Activated CD4-positive, alpha-beta memory T cell treated with anti-CD3 and anti-CD28 coated beads for 36 hours (primary cell): ENCODE measurements at regions of chr11 and their contacts with region 1.

Region 1: GRCh38 chr11:15074206-15075161 is 1.1 kb downstream of the CALCB start:
- DNase-seq: peak; percentile 92
- H3K4me3 Mint-ChIP-seq: peak overlapping the region; percentile 78
- H3K27ac Mint-ChIP-seq: peak overlapping the region; percentile 26
- H3K4me1 Mint-ChIP-seq: peaks cover 17% of the 10 kb centered on the region
- H3K27me3 Mint-ChIP-seq: peaks cover 10% of the 10 kb centered on the region

Region 2: DNA sequence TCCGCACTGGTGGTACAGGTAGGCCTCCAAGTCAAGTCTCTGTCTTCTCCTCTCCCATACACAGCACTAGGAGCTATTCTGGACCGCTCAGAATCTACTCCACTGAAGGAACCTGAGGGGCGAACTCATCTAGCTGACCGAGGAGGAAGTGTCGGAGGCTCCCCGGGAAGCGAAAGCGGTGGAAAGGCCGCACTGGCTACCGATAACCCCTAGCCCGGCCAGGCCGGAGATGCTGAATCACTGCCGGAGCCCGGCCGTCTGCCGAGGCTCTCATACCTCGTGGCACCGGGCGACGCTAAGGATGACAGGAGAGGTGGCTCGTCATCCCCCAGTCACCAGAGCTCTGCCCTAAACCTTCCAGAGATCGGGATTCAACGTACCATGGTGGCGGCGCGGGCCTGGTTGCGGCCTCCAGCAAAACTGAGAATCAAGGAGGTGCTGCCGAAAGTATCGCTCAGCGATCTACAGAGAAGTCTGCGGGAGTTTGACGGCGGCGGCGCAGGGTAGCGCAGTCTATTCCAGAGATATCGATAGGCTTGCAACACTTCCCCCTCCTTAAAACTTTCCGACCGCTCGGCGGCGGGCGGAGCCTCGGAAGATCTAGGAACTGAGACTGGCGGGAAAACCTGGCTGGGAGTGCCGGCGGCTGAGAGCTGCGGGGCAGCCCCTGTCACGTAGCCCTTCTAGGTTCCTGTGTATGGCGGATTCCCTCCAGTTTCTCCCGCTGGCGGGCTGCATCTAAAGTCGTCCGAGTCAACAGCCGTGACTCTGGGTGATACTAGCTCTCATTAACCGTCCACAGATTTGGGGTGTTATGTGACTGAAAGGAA is 554.4 kb before region 1 on chr11 and contains the start of gene PSMA1:
- CTCF ChIA-PET with region 1: no interaction called
- POLR2A ChIA-PET with region 1: no interaction called
- intact Hi-C with region 1: loop called (anchors 10 kb)
- DNase-seq: peak; percentile 97
- H3K4me3 Mint-ChIP-seq: peak within 1 kb of the TSS; percentile 96
- H3K27ac Mint-ChIP-seq: peak within 1 kb of the TSS; percentile 97
- H3K4me1 Mint-ChIP-seq: peaks cover 28% of the 10 kb centered on the region
- H3K27me3 Mint-ChIP-seq: no peaks in the 10 kb centered on the region
- total RNA-seq, gene PSMA1: 332 to 339 TPM

Region 3: DNA sequence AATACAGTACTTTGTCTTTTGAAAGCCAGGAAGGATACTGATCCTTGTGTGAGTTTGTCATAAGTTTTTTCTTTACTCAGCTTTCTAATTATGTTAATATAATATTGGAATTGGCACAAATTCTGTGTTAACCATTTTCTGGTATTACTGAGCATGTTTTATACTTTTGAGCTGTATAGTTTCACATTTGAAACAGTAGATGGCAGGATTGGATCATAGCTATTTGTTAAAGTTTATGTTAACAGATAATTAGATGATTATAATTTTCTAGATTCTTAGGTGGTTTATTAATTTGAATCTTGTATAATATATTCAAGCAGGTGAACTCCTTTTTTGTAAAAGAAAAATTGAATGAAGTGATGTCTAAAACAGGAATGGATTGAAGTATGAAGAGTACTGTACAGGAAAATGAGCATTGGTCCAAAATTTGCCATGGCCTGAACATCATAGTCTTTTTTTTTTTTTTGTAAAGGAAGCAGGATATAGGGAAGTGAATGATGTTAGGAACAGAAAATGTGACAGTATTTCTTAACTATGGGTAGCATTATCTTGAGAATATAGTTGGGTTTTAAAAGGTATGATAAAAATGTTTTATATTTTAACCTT is 284.5 kb before region 1 on chr11:
- CTCF ChIA-PET with region 1: interaction called, 9 read pairs
- POLR2A ChIA-PET with region 1: no interaction called
- intact Hi-C with region 1: loop called (anchors 2 kb)
- DNase-seq: no peak
- H3K4me3 Mint-ChIP-seq: no peak overlapping the region
- H3K27ac Mint-ChIP-seq: no peak overlapping the region
- H3K4me1 Mint-ChIP-seq: peaks cover 14% of the 10 kb centered on the region
- H3K27me3 Mint-ChIP-seq: no peaks in the 10 kb centered on the region

Region 4: DNA sequence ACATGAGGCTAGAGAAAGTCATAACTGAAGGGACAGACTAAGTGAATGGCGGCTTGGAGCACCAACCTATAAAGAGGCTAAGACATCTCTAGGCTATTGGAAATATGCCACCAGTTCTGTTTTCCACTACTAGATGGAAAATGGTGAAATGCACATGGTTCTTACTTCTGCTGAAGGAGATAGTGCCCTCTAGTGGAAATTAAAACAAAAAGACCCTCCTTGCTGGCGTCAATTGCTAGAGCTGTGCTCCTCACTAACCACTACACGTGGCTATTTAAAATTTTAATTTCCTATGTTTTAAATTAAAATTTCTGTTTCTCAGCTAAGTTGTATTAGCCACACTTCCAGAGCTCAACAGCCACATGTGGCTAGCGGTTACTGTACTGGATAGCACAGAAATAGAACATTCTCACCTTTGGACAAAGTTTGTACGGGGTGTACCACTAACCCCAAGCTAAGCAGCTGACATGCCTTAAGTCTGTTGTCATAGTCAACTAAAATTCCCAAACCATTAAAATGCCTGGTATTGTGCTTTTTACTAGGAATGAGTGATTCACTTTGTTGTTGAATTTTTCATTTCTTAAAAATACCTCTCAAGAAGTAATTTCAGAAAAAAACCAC is 68.2 kb before region 1 on chr11:
- CTCF ChIA-PET with region 1: interaction called, 65 read pairs
- POLR2A ChIA-PET with region 1: no interaction called
- intact Hi-C with region 1: loop called (anchors 1 kb)
- DNase-seq: peak; percentile 10
- H3K4me3 Mint-ChIP-seq: no peak overlapping the region
- H3K27ac Mint-ChIP-seq: no peak overlapping the region
- H3K4me1 Mint-ChIP-seq: peaks cover 2% of the 10 kb centered on the region
- H3K27me3 Mint-ChIP-seq: peaks cover 32% of the 10 kb centered on the region

Region 5: DNA sequence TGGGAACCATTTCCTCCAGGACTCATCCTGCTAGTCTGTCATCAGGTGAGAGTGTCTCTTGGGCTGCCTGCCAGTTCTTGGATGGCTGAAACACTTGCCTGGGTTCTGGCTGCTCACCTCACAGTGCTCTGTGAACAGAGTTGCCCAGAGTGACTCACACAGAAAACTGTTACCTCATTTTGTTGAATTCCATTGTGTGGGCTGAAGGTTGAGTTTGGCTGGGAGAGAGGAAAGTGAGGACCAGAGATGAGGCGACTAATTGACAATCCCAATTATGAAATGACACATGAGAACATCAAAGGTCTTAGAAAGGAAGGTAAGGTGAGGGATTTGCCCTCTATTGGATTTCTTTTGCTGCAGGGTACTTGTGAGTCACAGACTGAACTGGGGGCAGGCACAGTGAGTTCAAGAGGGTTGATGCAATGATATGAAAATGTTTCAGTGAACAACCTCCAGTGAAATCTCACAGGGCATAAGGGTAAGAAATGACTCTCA is 21.2 kb before region 1 on chr11:
- CTCF ChIA-PET with region 1: interaction called, 16 read pairs
- POLR2A ChIA-PET with region 1: no interaction called
- intact Hi-C with region 1: loop called (anchors 1 kb)
- DNase-seq: peak; percentile 56
- H3K4me3 Mint-ChIP-seq: no peak overlapping the region
- H3K27ac Mint-ChIP-seq: peak overlapping the region; percentile 61
- H3K4me1 Mint-ChIP-seq: peaks cover 19% of the 10 kb centered on the region
- H3K27me3 Mint-ChIP-seq: peaks cover 3% of the 10 kb centered on the region

Region 6: GRCh38 chr11:15189641-15190365 is 115.3 kb after region 1 on chr11:
- CTCF ChIA-PET with region 1: no interaction called
- POLR2A ChIA-PET with region 1: no interaction called
- intact Hi-C with region 1: no loop called
- DNase-seq: no peak
- H3K4me3 Mint-ChIP-seq: no peak overlapping the region
- H3K27ac Mint-ChIP-seq: no peak overlapping the region
- H3K4me1 Mint-ChIP-seq: no peaks in the 10 kb centered on the region
- H3K27me3 Mint-ChIP-seq: peaks cover 2% of the 10 kb centered on the region

Region 7: GRCh38 chr11:15248749-15249148 is 174.3 kb after region 1 on chr11:
- CTCF ChIA-PET with region 1: no interaction called
- POLR2A ChIA-PET with region 1: no interaction called
- intact Hi-C with region 1: no loop called
- DNase-seq: no peak
- H3K4me3 Mint-ChIP-seq: no peak overlapping the region
- H3K27ac Mint-ChIP-seq: no peak overlapping the region
- H3K4me1 Mint-ChIP-seq: no peaks in the 10 kb centered on the region
- H3K27me3 Mint-ChIP-seq: peaks cover 1% of the 10 kb centered on the region